AG04450 (cell line): ENCODE measurements at regions of chr2 and their contacts with region 1.

Region 1: DNA sequence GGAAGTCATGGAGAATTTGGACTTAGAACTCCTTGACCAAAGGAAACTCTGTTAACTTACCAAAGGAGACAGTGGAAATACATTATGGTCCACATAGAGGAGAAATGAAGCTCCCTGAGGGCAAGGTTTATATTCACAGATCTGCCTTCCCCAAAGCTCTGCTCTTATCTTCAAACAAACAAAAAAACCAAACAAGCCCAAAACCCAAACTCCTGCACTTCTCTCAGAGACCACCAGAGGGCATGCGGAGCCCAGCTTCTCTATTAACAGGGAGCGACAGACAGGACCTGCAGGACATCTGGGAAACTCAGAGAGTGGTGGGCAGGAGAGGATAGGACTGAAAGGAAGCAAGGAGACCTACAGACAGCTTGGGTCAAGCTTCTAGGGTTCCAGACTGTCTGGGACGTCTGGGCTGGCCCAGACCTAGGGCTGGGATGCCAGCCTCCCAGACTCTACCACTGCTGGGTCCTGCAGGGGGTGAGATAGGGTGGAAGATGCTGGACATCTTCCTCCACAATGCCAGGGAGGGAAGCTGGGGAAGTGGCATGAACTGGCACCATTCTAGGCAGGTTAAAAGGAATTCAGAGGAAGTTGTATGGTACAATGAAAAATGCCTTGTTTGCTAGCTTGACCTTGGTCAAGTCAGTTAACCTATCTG is 4.0 kb upstream of the WNT10A start:
- DNase-seq: no peak
- H3K4me3 ChIP-seq: no peak overlapping the region
- H3K27ac ChIP-seq: no peak overlapping the region
- H3K27me3 ChIP-seq: peaks cover 83% of the 10 kb centered on the region
- CTCF ChIP-seq: peak; percentile 97

Region 2: DNA sequence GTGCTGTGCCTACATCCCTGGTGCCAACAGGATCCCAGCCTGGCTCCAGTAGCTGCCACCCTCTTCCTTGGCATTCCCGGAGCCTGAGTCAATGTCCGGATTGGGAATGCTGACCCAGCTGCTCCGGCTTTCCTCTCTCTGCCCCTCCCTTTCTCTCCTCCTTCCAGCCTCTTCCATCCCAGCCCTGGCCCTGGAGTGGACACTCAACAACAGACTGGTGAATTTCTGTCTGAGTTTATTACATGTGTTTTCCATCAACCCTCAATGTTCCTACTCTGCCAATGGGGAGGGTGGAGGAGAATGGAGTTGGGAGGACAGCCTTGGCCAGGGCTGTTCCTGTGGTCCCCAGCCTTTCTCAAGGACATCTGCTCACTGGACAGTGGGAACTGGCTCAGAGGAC is 44.2 kb before region 1 on chr2:
- CTCF ChIA-PET with region 1: no interaction called
- POLR2A ChIA-PET with region 1: no interaction called
- DNase-seq: no peak
- H3K4me3 ChIP-seq: no peak overlapping the region
- H3K27ac ChIP-seq: no peak overlapping the region
- H3K27me3 ChIP-seq: peaks cover 39% of the 10 kb centered on the region
- CTCF ChIP-seq: no peak

Region 3: DNA sequence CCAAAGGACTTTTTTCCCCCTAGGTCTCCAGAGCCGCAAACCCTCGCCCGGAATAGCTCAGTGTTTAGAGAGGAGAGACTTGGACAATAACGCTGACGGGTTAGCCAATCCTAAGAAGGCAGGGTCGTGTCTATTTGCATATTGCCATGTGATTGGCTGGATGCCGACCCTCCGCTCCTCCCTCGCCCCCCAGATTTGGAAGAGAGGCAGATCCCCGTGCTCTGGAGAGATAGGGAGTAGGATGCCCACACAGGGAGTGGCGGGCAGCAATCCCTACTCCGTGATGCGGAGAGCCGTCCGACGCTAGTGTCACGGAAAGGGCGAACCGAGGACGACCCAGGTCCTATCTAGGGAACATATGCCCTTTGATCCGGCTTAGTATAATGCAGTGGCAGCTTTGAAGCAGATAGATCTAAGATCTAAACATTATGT is 15.7 kb before region 1 on chr2:
- CTCF ChIA-PET with region 1: interaction called, 12 read pairs
- POLR2A ChIA-PET with region 1: no interaction called
- DNase-seq: peak; percentile 11
- H3K4me3 ChIP-seq: no peak overlapping the region
- H3K27ac ChIP-seq: no peak overlapping the region
- H3K27me3 ChIP-seq: peaks cover 71% of the 10 kb centered on the region
- CTCF ChIP-seq: no peak

Region 4: GRCh38 chr2:218892693-218893348 is 16.1 kb after region 1 on chr2:
- CTCF ChIA-PET with region 1: interaction called, 127 read pairs
- POLR2A ChIA-PET with region 1: no interaction called
- DNase-seq: no peak
- H3K4me3 ChIP-seq: peak overlapping the region; percentile 39
- H3K27ac ChIP-seq: no peak overlapping the region
- H3K27me3 ChIP-seq: peaks cover 86% of the 10 kb centered on the region
- CTCF ChIP-seq: peak; percentile 31